Right cardiac atrium (tissue), 5 donors: ENCODE measurements at regions of chr6 and their contacts with region 1.

Region 1: GRCh38 chr6:144215932-144216667 is 65.8 kb downstream of the STX11 start:
- DNase-seq: peak; percentile 95 to 97 (median 96)
- ATAC-seq: peak; percentile 96 to 97
- H3K4me3 ChIP-seq: peak overlapping the region; percentile 65
- H3K27ac ChIP-seq: peak overlapping the region; percentile 94
- H3K4me1 ChIP-seq: peaks cover 3% of the 10 kb centered on the region
- H3K27me3 ChIP-seq: no peaks in the 10 kb centered on the region

Region 2: DNA sequence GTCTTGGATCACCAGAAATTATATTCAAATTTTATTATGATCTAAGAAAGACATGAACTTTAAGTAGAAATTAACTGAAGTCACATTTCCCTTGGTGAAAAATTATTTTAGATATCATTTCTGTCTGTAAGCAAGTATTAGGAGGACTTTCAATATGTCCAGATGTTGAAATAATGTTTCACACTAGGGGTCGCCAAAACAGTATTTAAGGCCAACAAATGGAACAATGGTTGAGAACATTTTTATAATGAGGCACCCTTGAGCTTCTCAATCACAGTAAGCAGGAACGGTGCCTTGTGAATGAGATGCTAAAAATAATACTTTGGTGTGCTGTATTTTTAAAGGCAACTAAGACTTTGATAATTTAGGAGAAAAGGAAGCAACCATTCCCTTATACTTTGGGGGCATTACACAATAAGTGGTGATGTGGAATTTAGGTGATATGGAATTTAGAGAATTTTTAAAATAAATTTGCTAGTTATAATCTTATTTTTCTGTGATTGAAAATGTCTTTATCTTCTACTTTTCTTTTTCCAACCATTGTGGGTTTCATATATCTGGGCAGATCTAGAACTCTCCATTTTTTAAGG is 111.1 kb before region 1 on chr6:
- intact Hi-C with region 1: loop called (anchors 2 to 10 kb)
- DNase-seq: no peak
- ATAC-seq: peak; percentile 83 to 88
- H3K4me3 ChIP-seq: no peak overlapping the region
- H3K27ac ChIP-seq: no peak overlapping the region
- H3K4me1 ChIP-seq: no peaks in the 10 kb centered on the region
- H3K27me3 ChIP-seq: no peaks in the 10 kb centered on the region

Region 3: DNA sequence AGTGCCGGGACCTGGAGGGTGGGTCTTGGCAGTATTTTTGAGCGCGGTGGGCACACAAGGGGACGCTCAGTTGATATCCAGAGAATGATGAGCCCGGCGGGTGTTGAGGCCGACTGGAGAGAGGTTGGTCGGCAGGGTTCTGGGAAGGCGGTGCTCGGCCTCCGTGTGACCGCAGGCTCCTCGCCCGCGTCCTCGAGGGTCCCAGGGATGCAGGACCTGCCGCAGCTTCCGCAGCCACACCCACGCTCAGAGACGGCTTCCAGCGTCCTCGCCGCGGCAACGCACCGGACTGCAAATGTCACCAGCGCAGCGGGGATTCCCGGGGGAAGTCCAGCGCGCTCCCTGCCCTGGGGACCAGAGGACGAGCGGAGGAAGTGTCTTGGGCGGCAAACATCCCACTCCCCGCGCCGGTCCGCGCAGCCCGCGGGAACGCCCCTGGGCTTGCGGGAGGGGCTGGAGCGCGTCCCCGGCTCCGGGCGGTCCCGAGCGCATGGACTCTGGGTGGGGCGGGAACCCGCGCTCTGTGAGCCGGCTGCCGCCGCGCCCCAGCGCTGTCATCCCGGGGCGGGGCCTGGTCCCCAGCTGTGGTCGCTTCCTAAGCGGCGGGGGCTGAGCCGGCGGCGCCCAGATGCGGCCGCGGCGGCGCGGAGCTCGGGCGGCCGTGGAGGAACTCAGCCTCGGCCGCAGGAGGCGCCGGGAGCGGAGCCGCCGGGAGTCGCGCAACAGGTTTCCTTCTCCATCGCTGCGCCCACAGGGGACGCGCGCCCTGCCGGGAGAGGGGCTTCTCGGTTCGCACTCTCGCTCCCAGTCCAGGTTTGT is 66.0 kb before region 1 on chr6 and contains the start of gene STX11:
- intact Hi-C with region 1: loop called in 1 of 4 experiments (anchors 5 kb)
- DNase-seq: peak; percentile 81 to 90 (median 90)
- ATAC-seq: peak; percentile 97 to 98
- H3K4me3 ChIP-seq: peak within 1 kb of the TSS; percentile 99
- H3K27ac ChIP-seq: peak within 1 kb of the TSS; percentile 77
- H3K4me1 ChIP-seq: peaks cover 4% of the 10 kb centered on the region
- H3K27me3 ChIP-seq: no peaks in the 10 kb centered on the region
- total RNA-seq, gene STX11: 1.5 to 6.8 (median 2.9) TPM

Region 4: GRCh38 chr6:144284783-144285547 is 68.9 kb after region 1 on chr6 and contains the start of gene UTRN:
- intact Hi-C with region 1: loop called in 1 of 4 experiments (anchors 5 kb)
- DNase-seq: peak; percentile 87 to 94 (median 94)
- ATAC-seq: peak; percentile 86 to 87
- H3K4me3 ChIP-seq: peak within 1 kb of the TSS; percentile 97
- H3K27ac ChIP-seq: peak within 1 kb of the TSS; percentile 99
- H3K4me1 ChIP-seq: no peaks in the 10 kb centered on the region
- H3K27me3 ChIP-seq: no peaks in the 10 kb centered on the region
- total RNA-seq, gene UTRN: 55.5 to 70.5 (median 68.5) TPM